ENCODE measurements at regions of chr5 and their contacts with region 1.

Region 1: DNA sequence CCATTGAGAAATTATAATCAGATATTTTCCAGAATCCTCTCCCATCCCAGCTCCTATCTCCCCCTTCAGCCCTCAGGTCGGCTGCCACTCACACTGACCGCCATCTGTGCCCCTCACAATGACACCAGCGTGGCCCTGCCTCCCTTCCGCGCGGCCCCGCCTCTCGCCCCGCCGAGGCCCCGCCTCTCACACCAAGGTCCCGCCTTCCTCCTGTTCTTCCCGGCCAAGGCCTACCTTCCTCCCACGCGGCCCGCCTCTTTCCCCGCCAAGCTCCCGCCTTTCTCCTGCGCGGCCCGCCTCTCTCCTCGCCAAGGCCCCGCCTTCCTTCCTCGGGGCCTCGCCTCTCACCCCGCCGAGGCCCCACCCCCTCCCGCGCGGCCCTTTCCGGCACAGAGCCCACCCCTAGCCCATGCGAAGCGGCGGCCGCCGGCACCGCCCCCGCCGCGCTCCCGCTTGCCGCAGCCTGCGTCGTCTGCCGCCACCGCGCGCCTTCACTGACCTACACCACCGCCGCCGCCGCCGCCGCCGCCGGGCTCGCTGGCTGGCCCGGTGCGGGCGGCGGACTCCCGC is at the start of gene DNAJC21:
- DNase-seq: peak; percentile 91 to 98 (median 96)
- ATAC-seq: peak; percentile 89 to 95 (median 91)
- H3K4me3 ChIP-seq: peak within 1 kb of the TSS; percentile 82 to 84
- H3K4me3 Mint-ChIP-seq: peak within 1 kb of the TSS; percentile 91 to 99 (median 92)
- H3K27ac ChIP-seq: peak within 1 kb of the TSS; percentile 71
- H3K27ac Mint-ChIP-seq: peak within 1 kb of the TSS; percentile 88 to 91
- H3K4me1 ChIP-seq: peaks cover 10 to 15% of the 10 kb centered on the region in 2 experiments
- H3K4me1 Mint-ChIP-seq: peaks cover 26 to 39% (median 33%) of the 10 kb centered on the region in 3 donors
- H3K27me3 ChIP-seq: no peaks in the 10 kb centered on the region
- H3K27me3 Mint-ChIP-seq: no peaks in the 10 kb centered on the region
- total RNA-seq, gene DNAJC21: 46.2 to 56.0 (median 51.9) TPM

Region 2: GRCh38 chr5:34838785-34839714 is 90.2 kb before region 1 on chr5 and contains the start of gene TTC23L:
- CTCF ChIA-PET with region 1: interaction called in 1 of 2 experiments, 5 read pairs
- POLR2A ChIA-PET with region 1: interaction called, 3 to 19 read pairs
- DNase-seq: peak; percentile 79 to 97 (median 89)
- ATAC-seq: peak; percentile 92 to 94 (median 94)
- H3K4me3 ChIP-seq: peak within 1 kb of the TSS; percentile 76 to 77
- H3K4me3 Mint-ChIP-seq: peak within 1 kb of the TSS; percentile 88 to 93 (median 91)
- H3K27ac ChIP-seq: peak within 1 kb of the TSS; percentile 76
- H3K27ac Mint-ChIP-seq: peak within 1 kb of the TSS; percentile 93
- H3K4me1 ChIP-seq: peaks cover 0 to 13% of the 10 kb centered on the region in 2 experiments
- H3K4me1 Mint-ChIP-seq: peaks cover 12 to 15% (median 14%) of the 10 kb centered on the region in 3 donors
- H3K27me3 ChIP-seq: peaks cover 0 to 8% of the 10 kb centered on the region in 2 experiments
- H3K27me3 Mint-ChIP-seq: peaks cover 3 to 5% of the 10 kb centered on the region in 2 donors
- total RNA-seq, gene TTC23L: 0.23 to 1.8 (median 0.64) TPM in 3 of 5 donors, not detected in the others

Region 3: DNA sequence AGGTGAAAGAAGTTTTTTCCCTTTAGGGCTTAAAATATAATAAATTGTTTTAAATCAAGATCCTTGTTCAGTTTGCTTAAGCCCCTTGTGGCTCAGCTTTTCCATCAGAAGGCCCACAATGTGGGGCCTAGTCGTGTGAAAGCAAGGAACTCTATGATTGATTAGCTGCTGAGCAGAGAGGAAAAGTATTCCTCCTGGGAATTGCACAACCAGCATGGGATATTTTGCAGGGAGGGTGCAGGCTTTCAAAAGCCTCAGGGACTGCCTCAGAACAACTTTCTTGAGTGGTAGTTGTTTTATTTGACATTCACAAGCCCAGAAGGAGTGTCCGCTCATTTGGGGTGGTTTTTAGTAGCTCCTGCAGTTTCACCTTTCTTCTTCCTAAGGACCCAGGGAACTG is 70.4 kb before region 1 on chr5:
- CTCF ChIA-PET with region 1: no interaction called
- POLR2A ChIA-PET with region 1: no interaction called
- DNase-seq: no peak
- ATAC-seq: no peak
- H3K4me3 ChIP-seq: no peak overlapping the region
- H3K4me3 Mint-ChIP-seq: no peak overlapping the region
- H3K27ac ChIP-seq: no peak overlapping the region
- H3K27ac Mint-ChIP-seq: no peak overlapping the region
- H3K4me1 ChIP-seq: no peaks in the 10 kb centered on the region
- H3K4me1 Mint-ChIP-seq: no peaks in the 10 kb centered on the region
- H3K27me3 ChIP-seq: no peaks in the 10 kb centered on the region
- H3K27me3 Mint-ChIP-seq: no peaks in the 10 kb centered on the region

Region 4: GRCh38 chr5:34915139-34915855 is 13.9 kb before region 1 on chr5 and contains the starts of genes BRIX1 and RAD1:
- CTCF ChIA-PET with region 1: interaction called, 3 to 19 read pairs
- POLR2A ChIA-PET with region 1: interaction called, 19 to 78 read pairs
- DNase-seq: peak; percentile 82 to 96 (median 91)
- ATAC-seq: peak; percentile 96 to 99 (median 98)
- H3K4me3 ChIP-seq: peak within 1 kb of the TSS; percentile 78 to 100
- H3K4me3 Mint-ChIP-seq: peak within 1 kb of the TSS in 1 of 3 donors; percentile 61
- H3K27ac ChIP-seq: peak within 1 kb of the TSS; percentile 84
- H3K27ac Mint-ChIP-seq: no peak within 1 kb of the TSS
- H3K4me1 ChIP-seq: peaks cover 20 to 21% of the 10 kb centered on the region in 2 experiments
- H3K4me1 Mint-ChIP-seq: peaks cover 34 to 38% (median 36%) of the 10 kb centered on the region in 3 donors
- H3K27me3 ChIP-seq: no peaks in the 10 kb centered on the region
- H3K27me3 Mint-ChIP-seq: no peaks in the 10 kb centered on the region
- total RNA-seq, gene BRIX1: 24.4 to 26.2 (median 24.4) TPM
- total RNA-seq, gene RAD1: 18.9 to 30.6 (median 20.7) TPM

Region 5: DNA sequence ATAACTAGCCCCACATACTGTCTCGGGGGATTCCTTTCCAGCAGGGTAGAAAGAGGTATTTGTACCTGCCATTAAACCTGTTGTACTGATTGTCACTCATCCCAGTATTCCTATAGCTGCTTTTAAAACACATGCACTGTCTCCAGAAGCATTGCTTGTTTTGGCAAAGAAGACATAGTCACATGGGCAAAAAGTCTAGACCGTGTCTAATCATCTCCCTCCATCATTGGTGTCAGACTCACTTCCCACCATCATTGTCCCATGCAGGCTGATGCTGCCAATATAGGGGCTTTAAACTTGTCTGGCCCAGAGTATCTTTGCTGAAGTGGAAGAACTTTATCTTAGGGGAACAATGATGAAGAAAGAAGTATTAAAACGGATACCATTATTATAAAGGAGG is 12.7 kb after region 1 on chr5:
- CTCF ChIA-PET with region 1: no interaction called
- POLR2A ChIA-PET with region 1: interaction called in 1 of 2 experiments, 11 read pairs
- DNase-seq: no peak
- ATAC-seq: no peak
- H3K4me3 ChIP-seq: no peak overlapping the region
- H3K4me3 Mint-ChIP-seq: no peak overlapping the region
- H3K27ac ChIP-seq: no peak overlapping the region
- H3K27ac Mint-ChIP-seq: no peak overlapping the region
- H3K4me1 ChIP-seq: no peaks in the 10 kb centered on the region
- H3K4me1 Mint-ChIP-seq: no peaks in the 10 kb centered on the region
- H3K27me3 ChIP-seq: no peaks in the 10 kb centered on the region
- H3K27me3 Mint-ChIP-seq: no peaks in the 10 kb centered on the region

Region 6: DNA sequence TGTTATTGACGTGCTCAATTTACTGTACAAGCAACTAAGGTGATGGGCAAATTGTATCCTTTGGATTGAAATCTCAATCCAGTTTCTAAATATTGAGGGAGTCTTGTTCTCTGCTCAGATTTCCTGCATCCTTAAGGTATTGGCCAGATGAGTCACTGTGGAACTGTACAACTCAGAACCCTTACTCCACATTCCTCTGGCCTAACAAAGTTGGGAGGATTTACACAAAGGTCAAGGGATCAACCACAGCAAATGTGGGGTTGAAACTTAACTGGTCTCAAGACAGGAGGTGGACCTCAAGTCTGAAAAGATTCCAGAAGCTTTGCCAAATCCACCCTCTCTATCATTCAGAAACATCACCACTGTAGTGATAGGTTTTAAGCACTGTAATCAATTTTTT is 200.0 kb after region 1 on chr5:
- CTCF ChIA-PET with region 1: no interaction called
- POLR2A ChIA-PET with region 1: interaction called in 1 of 2 experiments, 10 read pairs
- DNase-seq: no peak
- ATAC-seq: no peak
- H3K4me3 ChIP-seq: no peak overlapping the region
- H3K4me3 Mint-ChIP-seq: no peak overlapping the region
- H3K27ac ChIP-seq: no peak overlapping the region
- H3K27ac Mint-ChIP-seq: no peak overlapping the region
- H3K4me1 ChIP-seq: peaks cover 2 to 9% of the 10 kb centered on the region in 2 experiments
- H3K4me1 Mint-ChIP-seq: peaks cover 14 to 16% (median 15%) of the 10 kb centered on the region in 3 donors
- H3K27me3 ChIP-seq: peaks cover 0 to 11% of the 10 kb centered on the region in 2 experiments
- H3K27me3 Mint-ChIP-seq: peaks cover 38 to 40% of the 10 kb centered on the region in 2 donors

Region 7: DNA sequence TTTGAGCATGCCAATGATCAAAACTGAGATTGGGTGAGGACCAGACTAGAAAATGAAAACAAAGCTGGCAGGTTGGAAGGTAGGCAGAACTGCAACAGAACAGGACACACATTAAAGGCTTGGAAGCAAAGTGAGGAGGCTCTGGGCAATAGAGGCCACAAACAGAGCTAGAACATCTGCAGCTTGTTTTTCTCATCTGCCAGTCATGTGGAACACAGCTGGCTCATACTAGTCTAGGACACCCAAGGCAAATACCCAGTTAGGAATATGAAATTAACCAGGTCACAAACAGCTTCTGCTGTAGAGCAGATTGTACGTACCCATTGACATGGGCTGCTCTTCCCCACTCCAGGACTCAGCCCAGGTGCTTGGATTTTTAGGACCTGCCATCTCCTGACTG is 750.1 kb after region 1 on chr5:
- CTCF ChIA-PET with region 1: no interaction called
- POLR2A ChIA-PET with region 1: no interaction called
- DNase-seq: no peak
- ATAC-seq: peak in 1 of 4 experiments; percentile 42
- H3K4me3 ChIP-seq: no peak overlapping the region
- H3K4me3 Mint-ChIP-seq: no peak overlapping the region
- H3K27ac ChIP-seq: no peak overlapping the region
- H3K27ac Mint-ChIP-seq: peak overlapping the region; percentile 56 to 83
- H3K4me1 ChIP-seq: peaks cover 7 to 13% of the 10 kb centered on the region in 2 experiments
- H3K4me1 Mint-ChIP-seq: peaks cover 17 to 36% (median 20%) of the 10 kb centered on the region in 3 donors
- H3K27me3 ChIP-seq: no peaks in the 10 kb centered on the region
- H3K27me3 Mint-ChIP-seq: no peaks in the 10 kb centered on the region

Measured in T-cell (primary cell).